ENCODE measurements at regions of chr1 and their contacts with region 1.

Region 1: GRCh38 chr1:65209005-65209885 is 61.2 kb downstream of the AK4 start:
- DNase-seq: no peak
- ATAC-seq: peak; percentile 63 to 77 (median 76)
- H3K4me3 ChIP-seq: no peak overlapping the region
- H3K27ac ChIP-seq: peak overlapping the region in 2 of 3 donors; percentile 8 to 70
- H3K4me1 ChIP-seq: peaks cover 0 to 23% (median 7%) of the 10 kb centered on the region in 4 donors
- H3K27me3 ChIP-seq: no peaks in the 10 kb centered on the region
- CTCF ChIP-seq: peak; percentile 65 to 69 (median 68)
- POLR2A ChIP-seq: no peak

Region 2: GRCh38 chr1:65067491-65068201 is 141.6 kb before region 1 on chr1:
- intact Hi-C with region 1: loop called in 1 of 2 experiments (anchors 10 kb)
- DNase-seq: peak; percentile 74 to 82 (median 75)
- ATAC-seq: peak; percentile 50 to 56 (median 52)
- H3K4me3 ChIP-seq: peak overlapping the region; percentile 57 to 76 (median 74)
- H3K27ac ChIP-seq: peak overlapping the region; percentile 98 to 100 (median 99)
- H3K4me1 ChIP-seq: peaks cover 0 to 10% (median 0%) of the 10 kb centered on the region in 4 donors
- H3K27me3 ChIP-seq: no peaks in the 10 kb centered on the region
- CTCF ChIP-seq: no peak
- POLR2A ChIP-seq: peak; percentile 57

Region 3: GRCh38 chr1:65083263-65083896 is 125.9 kb before region 1 on chr1:
- intact Hi-C with region 1: loop called in 1 of 2 experiments (anchors 10 kb)
- DNase-seq: no peak
- ATAC-seq: peak in 1 of 4 donors; percentile 49
- H3K4me3 ChIP-seq: no peak overlapping the region
- H3K27ac ChIP-seq: no peak overlapping the region
- H3K4me1 ChIP-seq: no peaks in the 10 kb centered on the region
- H3K27me3 ChIP-seq: no peaks in the 10 kb centered on the region
- CTCF ChIP-seq: no peak
- POLR2A ChIP-seq: no peak

Region 4: GRCh38 chr1:65292861-65293593 is 83.8 kb after region 1 on chr1:
- intact Hi-C with region 1: no loop called
- DNase-seq: no peak
- ATAC-seq: peak in 1 of 4 donors; percentile 30
- H3K4me3 ChIP-seq: no peak overlapping the region
- H3K27ac ChIP-seq: no peak overlapping the region
- H3K4me1 ChIP-seq: no peaks in the 10 kb centered on the region
- H3K27me3 ChIP-seq: no peaks in the 10 kb centered on the region
- CTCF ChIP-seq: no peak
- POLR2A ChIP-seq: no peak